K562 (cell line): ENCODE measurements at regions of chr14 and their contacts with region 1.

Region 1: DNA sequence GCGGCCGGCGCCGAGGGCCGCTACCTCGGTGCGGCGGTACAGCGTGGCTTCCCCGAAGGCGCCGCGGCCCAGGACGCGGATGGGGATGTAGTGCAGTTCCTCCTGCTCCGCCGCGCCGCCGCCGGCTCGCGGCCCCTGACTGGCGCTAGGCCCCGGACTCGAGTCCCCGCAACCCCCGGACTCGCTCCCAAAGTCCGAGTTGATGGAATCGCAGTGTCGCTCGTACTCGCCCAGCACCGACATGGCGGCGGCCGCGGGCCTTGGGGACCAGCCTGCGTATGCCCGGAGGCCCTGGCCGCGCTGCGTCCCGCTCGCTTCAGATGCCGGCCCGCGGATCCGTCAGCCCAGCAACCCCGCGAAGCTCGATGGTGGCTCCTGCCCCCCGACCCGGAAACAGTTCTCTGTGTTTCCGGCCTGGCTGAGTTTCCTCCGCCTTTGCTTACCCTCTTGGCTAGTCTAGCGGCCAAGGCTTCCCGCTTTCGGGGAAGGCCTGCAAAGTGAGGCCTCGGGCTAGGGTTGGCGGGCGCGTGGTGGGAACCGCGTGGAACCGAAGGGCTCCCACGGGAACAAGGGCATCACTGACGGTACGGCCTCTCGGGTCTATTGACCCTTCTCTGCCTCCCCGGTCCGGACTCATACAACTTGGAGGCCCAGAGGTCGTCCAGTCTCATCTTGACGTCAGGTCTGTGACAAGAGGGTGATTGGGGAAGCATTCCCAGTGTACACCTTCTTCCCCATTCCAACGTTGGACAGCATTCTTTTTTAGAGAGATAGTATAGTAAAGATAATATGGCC is at the start of gene NEK9:
- DNase-seq: peak; percentile 68 to 88 (median 78)
- ATAC-seq: peak; percentile 94
- H3K4me3 ChIP-seq: peak within 1 kb of the TSS; percentile 73
- H3K27ac ChIP-seq: peak within 1 kb of the TSS; percentile 98
- H3K4me1 ChIP-seq: peaks cover 11 to 14% of the 10 kb centered on the region in 2 experiments
- H3K27me3 ChIP-seq: no peaks in the 10 kb centered on the region
- CTCF ChIP-seq: no peak
- EP300 ChIP-seq: no peak
- POLR2A ChIP-seq: peak; percentile 91
- RAD21 ChIP-seq: no peak
- polyA plus RNA-seq, gene NEK9: 2.8 to 5.5 TPM

Region 2: GRCh38 chr14:75636100-75636692 is 509.3 kb after region 1 on chr14:
- CTCF ChIA-PET with region 1: no interaction called
- POLR2A ChIA-PET with region 1: no interaction called
- in situ Hi-C with region 1: no loop called
- intact Hi-C with region 1: no loop called
- DNase-seq: no peak
- ATAC-seq: no peak
- H3K4me3 ChIP-seq: no peak overlapping the region
- H3K27ac ChIP-seq: no peak overlapping the region
- H3K4me1 ChIP-seq: no peaks in the 10 kb centered on the region
- H3K27me3 ChIP-seq: peaks cover 10 to 39% of the 10 kb centered on the region in 2 experiments; a peak in 4 of 5 replicates
- CTCF ChIP-seq: no peak
- EP300 ChIP-seq: no peak
- POLR2A ChIP-seq: no peak
- RAD21 ChIP-seq: no peak

Region 3: DNA sequence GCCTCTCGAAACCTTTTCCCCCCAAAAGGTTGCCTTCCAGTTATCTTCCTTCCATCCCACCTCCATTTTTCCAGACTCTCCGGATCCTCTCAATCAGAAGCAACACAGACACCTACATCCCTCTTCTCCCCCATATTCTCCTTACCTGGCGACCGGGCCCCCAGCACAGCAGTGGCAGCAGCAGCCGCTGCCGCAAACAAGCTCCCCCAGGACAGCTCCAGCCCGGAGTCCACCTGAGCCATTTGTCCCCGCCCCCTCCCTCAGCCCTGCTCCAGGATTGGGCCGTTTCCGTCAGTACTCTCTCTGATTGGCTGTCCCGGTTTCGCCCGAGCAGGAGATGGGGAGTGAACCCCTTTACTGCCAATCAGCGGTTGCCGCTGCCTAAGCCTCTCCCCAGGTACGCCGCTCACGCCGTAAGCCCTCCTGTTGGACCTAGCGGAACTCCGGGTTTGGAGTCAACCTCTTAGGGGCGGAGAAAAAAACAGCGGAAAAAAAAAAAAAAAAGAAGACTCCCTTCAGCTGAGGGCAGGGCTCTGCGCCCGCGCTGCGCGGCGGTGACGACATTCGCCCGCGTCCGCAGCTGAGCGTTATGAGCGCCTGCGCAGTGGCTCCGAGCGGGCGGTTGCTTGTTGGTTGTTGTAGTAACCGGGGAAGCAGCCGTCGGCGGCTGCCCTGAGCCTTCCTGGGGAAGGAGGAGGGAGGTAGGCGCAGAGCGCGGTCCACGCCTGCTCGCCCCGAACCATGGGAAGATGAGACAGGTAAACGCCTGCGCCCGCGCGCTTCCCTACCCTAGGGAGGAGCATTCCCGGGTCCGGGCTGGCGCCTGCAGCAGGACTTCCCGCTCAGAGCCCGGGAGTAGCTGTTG is 534.0 kb after region 1 on chr14 and contains the starts of genes ERG28 and TTLL5:
- CTCF ChIA-PET with region 1: no interaction called
- POLR2A ChIA-PET with region 1: no interaction called
- in situ Hi-C with region 1: loop called (anchors 25 kb)
- intact Hi-C with region 1: no loop called
- DNase-seq: peak; percentile 94 to 98 (median 96)
- ATAC-seq: peak; percentile 98
- H3K4me3 ChIP-seq: peak within 1 kb of the TSS; percentile 96
- H3K27ac ChIP-seq: peak within 1 kb of the TSS; percentile 71
- H3K4me1 ChIP-seq: peaks cover 0 to 4% of the 10 kb centered on the region in 2 experiments; a peak in 4 of 5 replicates
- H3K27me3 ChIP-seq: no peaks in the 10 kb centered on the region
- CTCF ChIP-seq: no peak
- EP300 ChIP-seq: peak; percentile 36; the same call in 1 of the 2 replicates
- POLR2A ChIP-seq: peak; percentile 78
- RAD21 ChIP-seq: no peak
- polyA plus RNA-seq, gene ERG28: 26.0 to 32.4 TPM
- polyA plus RNA-seq, gene TTLL5: 4.1 to 5.4 TPM